Aorta (tissue), 5 donors: ENCODE measurements at regions of chr16 and their contacts with region 1.

Region 1: GRCh38 chr16:75305364-75306098 is 54.1 kb upstream of the BCAR1 start:
- DNase-seq: peak; percentile 85 to 90
- ATAC-seq: peak; percentile 87
- H3K4me3 ChIP-seq: no peak overlapping the region
- H3K27ac ChIP-seq: peak overlapping the region; percentile 91 to 94
- H3K4me1 ChIP-seq: peaks cover 5 to 6% of the 10 kb centered on the region in 2 donors
- H3K27me3 ChIP-seq: no peaks in the 10 kb centered on the region

Region 2: GRCh38 chr16:75238132-75238852 is 67.2 kb before region 1 on chr16:
- intact Hi-C with region 1: loop called in 1 of 2 experiments (anchors 5 kb)
- DNase-seq: peak; percentile 90 to 93
- ATAC-seq: peak; percentile 72
- H3K4me3 ChIP-seq: no peak overlapping the region
- H3K27ac ChIP-seq: peak overlapping the region; percentile 58 to 64
- H3K4me1 ChIP-seq: no peaks in the 10 kb centered on the region
- H3K27me3 ChIP-seq: no peaks in the 10 kb centered on the region

Region 3: GRCh38 chr16:75251280-75252048 is 54.1 kb before region 1 on chr16 and contains the start of gene BCAR1:
- intact Hi-C with region 1: loop called in 1 of 2 experiments (anchors 5 kb)
- DNase-seq: peak; percentile 91 to 95
- ATAC-seq: peak; percentile 73
- H3K4me3 ChIP-seq: peak within 1 kb of the TSS; percentile 69 to 82
- H3K27ac ChIP-seq: peak within 1 kb of the TSS; percentile 88 to 95
- H3K4me1 ChIP-seq: peaks cover 0 to 8% of the 10 kb centered on the region in 2 donors
- H3K27me3 ChIP-seq: no peaks in the 10 kb centered on the region
- total RNA-seq, gene BCAR1: 125 to 140 TPM

Region 4: GRCh38 chr16:75265845-75266701 is 39.5 kb before region 1 on chr16:
- intact Hi-C with region 1: loop called in 1 of 2 experiments (anchors 5 kb)
- DNase-seq: peak; percentile 76 to 91
- ATAC-seq: peak; percentile 60
- H3K4me3 ChIP-seq: peak overlapping the region; percentile 93 to 97
- H3K27ac ChIP-seq: peak overlapping the region; percentile 86 to 95
- H3K4me1 ChIP-seq: peaks cover 0 to 2% of the 10 kb centered on the region in 2 donors
- H3K27me3 ChIP-seq: no peaks in the 10 kb centered on the region

Region 5: DNA sequence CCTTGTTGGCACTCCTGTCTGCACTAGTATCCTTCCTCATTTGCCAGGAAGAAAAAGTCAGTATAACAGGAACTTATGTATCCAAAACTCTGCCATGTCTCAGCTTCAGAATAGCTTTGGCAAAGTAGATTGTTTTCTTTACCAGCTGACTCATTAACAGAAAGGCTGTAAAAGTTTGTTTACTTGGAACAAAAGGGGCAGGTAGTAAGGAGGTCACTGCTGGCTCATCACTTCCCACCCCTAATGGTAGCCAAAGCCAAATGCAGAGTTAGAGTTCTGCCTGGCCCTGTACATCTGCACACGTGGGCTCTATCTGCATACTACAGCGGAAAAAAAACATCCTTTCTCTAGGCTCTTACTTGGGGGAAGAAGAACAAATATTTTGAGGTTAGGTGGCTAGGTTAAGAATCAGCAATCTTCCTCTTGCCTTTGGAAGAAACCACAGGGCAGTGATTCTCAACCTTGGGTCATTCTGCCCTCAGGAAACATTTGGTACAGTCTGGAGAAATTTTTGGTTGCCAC is 36.8 kb after region 1 on chr16:
- intact Hi-C with region 1: loop called in 1 of 2 experiments (anchors 5 kb)
- DNase-seq: no peak
- ATAC-seq: peak; percentile 79
- H3K4me3 ChIP-seq: no peak overlapping the region
- H3K27ac ChIP-seq: peak overlapping the region; percentile 60 to 66
- H3K4me1 ChIP-seq: peaks cover 8 to 16% of the 10 kb centered on the region in 2 donors
- H3K27me3 ChIP-seq: no peaks in the 10 kb centered on the region

Region 6: DNA sequence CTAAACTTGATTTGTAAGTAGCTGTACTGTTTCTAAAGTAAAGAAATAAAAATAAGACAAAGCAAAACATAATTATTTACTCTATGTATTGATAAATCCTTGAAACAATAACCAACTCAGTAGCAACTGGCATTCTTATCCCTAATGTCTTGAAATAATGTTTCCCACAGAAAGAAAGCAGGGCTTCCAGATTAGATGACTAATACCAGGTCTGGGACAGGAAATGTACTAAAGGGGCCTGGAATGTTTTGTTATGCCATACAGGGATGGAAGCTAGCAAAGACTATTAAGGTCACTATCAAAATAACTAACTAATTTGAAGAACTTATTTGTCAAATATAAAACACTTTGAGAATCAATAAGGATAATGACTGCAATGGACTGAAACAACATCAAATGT is 45.7 kb after region 1 on chr16:
- intact Hi-C with region 1: loop called in 1 of 2 experiments (anchors 2 kb)
- DNase-seq: no peak
- ATAC-seq: no peak
- H3K4me3 ChIP-seq: no peak overlapping the region
- H3K27ac ChIP-seq: no peak overlapping the region
- H3K4me1 ChIP-seq: peaks cover 0 to 5% of the 10 kb centered on the region in 2 donors
- H3K27me3 ChIP-seq: no peaks in the 10 kb centered on the region

Region 7: GRCh38 chr16:75379911-75380847 is 74.6 kb after region 1 on chr16:
- intact Hi-C with region 1: loop called (anchors 5 kb)
- DNase-seq: no peak
- ATAC-seq: no peak
- H3K4me3 ChIP-seq: no peak overlapping the region
- H3K27ac ChIP-seq: no peak overlapping the region
- H3K4me1 ChIP-seq: peaks cover 0 to 10% of the 10 kb centered on the region in 2 donors
- H3K27me3 ChIP-seq: no peaks in the 10 kb centered on the region